BJ (cell line): ENCODE measurements at regions of chr17 and their contacts with region 1.

Region 1: DNA sequence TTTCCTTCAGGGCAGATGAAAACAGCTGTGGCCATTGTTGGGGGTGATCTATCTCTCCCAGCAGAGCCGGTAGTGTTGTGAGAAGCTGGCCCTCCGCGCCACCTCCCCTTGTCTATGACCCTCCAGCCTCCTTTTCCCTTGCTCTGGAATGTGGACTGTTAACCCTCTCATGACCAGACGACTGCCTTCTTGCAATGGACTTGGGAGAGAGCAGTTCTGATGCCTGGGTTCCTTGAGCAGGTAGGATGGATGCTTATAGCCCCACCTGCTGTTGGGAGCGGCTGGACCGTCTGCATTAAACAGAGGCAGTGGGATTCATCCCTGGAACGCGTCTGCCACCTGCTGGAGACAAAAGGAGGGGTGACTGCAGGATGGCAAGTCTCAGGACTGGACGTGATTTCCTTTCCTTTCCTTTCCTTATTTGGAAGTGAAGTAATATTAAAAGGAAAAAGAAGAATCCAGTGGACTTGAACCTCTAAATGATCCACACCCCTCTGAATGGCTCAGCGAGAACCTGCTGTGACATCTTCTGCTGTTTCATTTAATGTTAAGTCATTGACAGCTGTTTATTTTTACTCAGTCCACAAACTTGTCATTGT is 1.8 kb upstream of the SOST start:
- DNase-seq: peak; percentile 50
- H3K4me3 ChIP-seq: no peak overlapping the region
- H3K27me3 ChIP-seq: peaks cover 18% of the 10 kb centered on the region
- CTCF ChIP-seq: peak; percentile 99

Region 2: GRCh38 chr17:43576563-43577229 is 183.7 kb before region 1 on chr17:
- CTCF ChIA-PET with region 1: interaction called, 68 read pairs
- POLR2A ChIA-PET with region 1: no interaction called
- DNase-seq: no peak
- H3K4me3 ChIP-seq: no peak overlapping the region
- H3K27me3 ChIP-seq: peaks cover 1% of the 10 kb centered on the region; the same call in 1 of the 2 replicates
- CTCF ChIP-seq: peak; percentile 90

Region 3: GRCh38 chr17:43694077-43694870 is 66.1 kb before region 1 on chr17:
- CTCF ChIA-PET with region 1: interaction called, 784 read pairs
- POLR2A ChIA-PET with region 1: no interaction called
- DNase-seq: no peak
- H3K4me3 ChIP-seq: no peak overlapping the region
- H3K27me3 ChIP-seq: peaks cover 9% of the 10 kb centered on the region
- CTCF ChIP-seq: peak; percentile 87

Region 4: GRCh38 chr17:43740541-43740940 is 19.8 kb before region 1 on chr17:
- CTCF ChIA-PET with region 1: interaction called, 12 read pairs
- POLR2A ChIA-PET with region 1: no interaction called
- DNase-seq: no peak
- H3K4me3 ChIP-seq: no peak overlapping the region
- H3K27me3 ChIP-seq: no peaks in the 10 kb centered on the region
- CTCF ChIP-seq: no peak

Region 5: GRCh38 chr17:43803758-43804157 is 43.4 kb after region 1 on chr17:
- CTCF ChIA-PET with region 1: no interaction called
- POLR2A ChIA-PET with region 1: no interaction called
- DNase-seq: no peak
- H3K4me3 ChIP-seq: no peak overlapping the region
- H3K27me3 ChIP-seq: no peaks in the 10 kb centered on the region
- CTCF ChIP-seq: no peak

Region 6: DNA sequence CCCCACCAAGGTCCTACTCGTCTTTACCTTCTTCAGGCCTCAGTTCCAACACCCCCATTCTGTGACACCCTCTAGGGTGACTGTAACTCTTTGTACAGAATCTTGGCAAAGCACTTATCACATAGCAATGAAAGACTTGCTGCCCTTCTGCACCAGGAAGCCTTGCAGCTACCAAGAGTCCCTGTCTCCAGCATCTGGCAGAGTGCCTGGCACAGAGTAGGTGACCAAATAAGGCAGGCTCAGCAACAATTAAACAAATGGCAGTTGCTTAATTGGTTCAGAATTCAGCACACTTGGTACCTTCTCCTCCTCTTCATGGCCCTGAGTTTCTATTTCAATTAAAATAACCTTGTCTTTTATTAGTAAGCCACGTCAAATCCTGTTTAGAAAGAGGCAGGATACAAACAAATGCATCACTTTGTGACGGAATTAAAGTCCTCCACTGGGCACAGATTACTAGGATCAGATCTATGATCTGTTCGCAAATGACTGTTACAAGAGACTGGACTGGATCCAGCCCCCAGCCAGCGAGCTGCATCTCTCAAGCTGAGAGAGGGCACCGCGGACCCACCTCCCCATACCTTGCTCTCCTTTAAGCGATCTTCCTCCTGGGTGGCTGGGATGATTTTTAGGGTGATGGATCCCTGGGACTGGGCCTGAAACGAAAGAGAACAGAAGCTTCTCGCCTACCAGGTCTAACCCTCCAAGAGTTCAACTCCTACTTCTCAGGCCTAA is 63.2 kb after region 1 on chr17:
- CTCF ChIA-PET with region 1: no interaction called
- POLR2A ChIA-PET with region 1: no interaction called
- DNase-seq: no peak
- H3K4me3 ChIP-seq: no peak overlapping the region
- H3K27me3 ChIP-seq: no peaks in the 10 kb centered on the region
- CTCF ChIP-seq: no peak

Region 7: GRCh38 chr17:43846221-43846712 is 85.9 kb after region 1 on chr17:
- CTCF ChIA-PET with region 1: interaction called, 14 read pairs
- POLR2A ChIA-PET with region 1: no interaction called
- DNase-seq: no peak
- H3K4me3 ChIP-seq: no peak overlapping the region
- H3K27me3 ChIP-seq: peaks cover 10% of the 10 kb centered on the region
- CTCF ChIP-seq: peak; percentile 100